SK-N-SH (cell line): ENCODE measurements at regions of chr11 and their contacts with region 1.

Region 1: GRCh38 chr11:66282468-66283386 is 4.8 kb downstream of the CNIH2 start:
- DNase-seq: peak; percentile 98
- H3K4me3 ChIP-seq: peak overlapping the region in 1 of 2 experiments; percentile 48; a peak in 2 of 4 replicates
- H3K27ac ChIP-seq: peak overlapping the region; percentile 47 to 57; a peak in 3 of 4 replicates
- H3K4me1 ChIP-seq: peaks cover 0 to 55% of the 10 kb centered on the region in 2 experiments; a peak in 1 of 4 replicates
- H3K27me3 ChIP-seq: no peaks in the 10 kb centered on the region
- CTCF ChIP-seq: peak; percentile 95
- EP300 ChIP-seq: no peak
- RAD21 ChIP-seq: peak; percentile 66

Region 2: GRCh38 chr11:66251809-66252208 is 30.9 kb before region 1 on chr11:
- CTCF ChIA-PET with region 1: interaction called, 10 read pairs
- POLR2A ChIA-PET with region 1: no interaction called
- DNase-seq: no peak
- H3K4me3 ChIP-seq: no peak overlapping the region
- H3K27ac ChIP-seq: no peak overlapping the region
- H3K4me1 ChIP-seq: peaks cover 0 to 7% of the 10 kb centered on the region in 2 experiments; a peak in 1 of 4 replicates
- H3K27me3 ChIP-seq: no peaks in the 10 kb centered on the region
- CTCF ChIP-seq: no peak
- EP300 ChIP-seq: no peak
- RAD21 ChIP-seq: no peak

Region 3: GRCh38 chr11:66268283-66268951 is 14.3 kb before region 1 on chr11 and contains the start of gene RAB1B:
- CTCF ChIA-PET with region 1: interaction called, 111 read pairs
- POLR2A ChIA-PET with region 1: interaction called, 8 read pairs
- DNase-seq: peak; percentile 96
- H3K4me3 ChIP-seq: peak within 1 kb of the TSS; percentile 85 to 89
- H3K27ac ChIP-seq: peak within 1 kb of the TSS; percentile 84 to 97
- H3K4me1 ChIP-seq: peaks cover 11 to 14% of the 10 kb centered on the region in 2 experiments; a peak in 2 of 4 replicates
- H3K27me3 ChIP-seq: no peaks in the 10 kb centered on the region
- CTCF ChIP-seq: no peak
- EP300 ChIP-seq: no peak
- RAD21 ChIP-seq: no peak
- polyA plus RNA-seq, gene RAB1B: 204 and 208 TPM in 2 replicates

Region 4: DNA sequence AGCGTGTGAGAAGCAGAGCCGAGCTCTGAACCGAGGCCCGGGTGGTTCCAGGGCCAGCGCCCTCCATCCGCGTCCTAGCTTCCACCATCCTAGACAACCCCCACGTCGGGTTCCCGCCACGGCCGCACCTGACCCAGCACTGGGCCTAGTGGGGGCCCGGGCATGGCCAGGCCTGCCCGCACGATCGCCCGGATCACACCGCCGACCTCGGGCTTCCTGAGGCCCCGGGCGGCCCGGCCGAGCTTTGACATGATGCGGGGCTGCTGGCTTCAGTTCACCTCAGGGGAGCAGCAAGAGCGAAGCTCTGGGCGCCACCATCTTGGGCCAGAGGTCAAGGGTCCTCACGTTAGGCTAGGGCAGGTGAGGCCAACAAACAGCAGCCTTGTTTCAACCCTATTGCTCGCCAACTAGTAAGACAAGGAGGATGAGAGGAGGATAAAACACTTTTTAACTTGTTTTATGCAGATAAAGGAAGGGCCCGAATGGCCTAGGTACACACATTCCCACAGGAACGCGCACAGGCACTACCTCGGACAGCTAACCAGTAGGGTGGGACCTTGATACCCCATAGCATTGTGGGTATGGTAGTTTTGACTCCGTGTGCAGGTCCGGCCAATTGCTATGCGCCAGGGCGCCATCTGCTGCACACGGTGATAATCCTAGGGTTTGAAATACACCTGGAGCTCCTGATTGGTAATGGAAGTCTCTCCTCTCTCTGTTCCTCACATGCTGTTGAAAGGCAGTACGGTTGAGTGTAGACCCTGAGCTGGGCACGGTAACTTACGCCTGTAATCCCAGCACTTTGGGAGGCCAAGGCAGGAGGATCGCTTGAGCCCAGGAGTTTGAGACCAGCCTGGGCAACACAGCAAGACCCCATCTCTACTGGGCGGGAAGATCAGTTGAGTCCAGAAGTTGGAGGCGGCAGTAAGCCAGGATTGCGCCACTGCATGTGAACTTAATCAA is 156.1 kb after region 1 on chr11 and contains the start of gene MRPL11:
- CTCF ChIA-PET with region 1: no interaction called
- POLR2A ChIA-PET with region 1: no interaction called
- DNase-seq: peak; percentile 98
- H3K4me3 ChIP-seq: peak within 1 kb of the TSS; percentile 78 to 87
- H3K27ac ChIP-seq: peak within 1 kb of the TSS; percentile 63 to 91
- H3K4me1 ChIP-seq: peaks cover 0 to 5% of the 10 kb centered on the region in 2 experiments; a peak in 1 of 4 replicates
- H3K27me3 ChIP-seq: peaks cover 20% of the 10 kb centered on the region; the same call in 1 of the 2 replicates
- CTCF ChIP-seq: peak; percentile 74
- EP300 ChIP-seq: no peak
- RAD21 ChIP-seq: peak; percentile 55
- polyA plus RNA-seq, gene MRPL11: 33.9 and 45.6 TPM in 2 replicates